A673 (cell line): ENCODE measurements at regions of chr13 and their contacts with region 1.

Region 1: DNA sequence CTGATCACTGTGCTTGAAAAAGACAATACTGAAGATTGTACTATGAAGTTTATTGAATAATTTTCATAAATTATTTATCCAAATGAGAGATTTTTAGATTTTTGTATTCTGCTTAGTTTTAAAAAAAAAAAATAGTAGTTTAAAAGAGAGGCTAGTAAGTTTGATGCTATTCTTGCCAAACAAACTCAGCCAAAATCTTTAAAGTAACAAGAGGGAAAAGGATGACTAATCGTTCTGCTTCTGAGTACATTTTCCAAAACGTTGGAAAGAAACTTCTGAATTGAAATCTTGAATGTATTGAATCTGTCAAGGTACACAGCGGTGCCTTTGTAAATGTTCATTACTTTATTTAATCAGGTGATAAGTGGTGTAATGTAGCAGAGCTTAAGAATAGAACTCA is 34.4 kb downstream of the NUP58 start:
- DNase-seq: no peak
- H3K4me3 ChIP-seq: no peak overlapping the region
- H3K27ac ChIP-seq: no peak overlapping the region
- H3K4me1 ChIP-seq: no peaks in the 10 kb centered on the region
- H3K27me3 ChIP-seq: no peaks in the 10 kb centered on the region
- CTCF ChIP-seq: no peak

Region 2: DNA sequence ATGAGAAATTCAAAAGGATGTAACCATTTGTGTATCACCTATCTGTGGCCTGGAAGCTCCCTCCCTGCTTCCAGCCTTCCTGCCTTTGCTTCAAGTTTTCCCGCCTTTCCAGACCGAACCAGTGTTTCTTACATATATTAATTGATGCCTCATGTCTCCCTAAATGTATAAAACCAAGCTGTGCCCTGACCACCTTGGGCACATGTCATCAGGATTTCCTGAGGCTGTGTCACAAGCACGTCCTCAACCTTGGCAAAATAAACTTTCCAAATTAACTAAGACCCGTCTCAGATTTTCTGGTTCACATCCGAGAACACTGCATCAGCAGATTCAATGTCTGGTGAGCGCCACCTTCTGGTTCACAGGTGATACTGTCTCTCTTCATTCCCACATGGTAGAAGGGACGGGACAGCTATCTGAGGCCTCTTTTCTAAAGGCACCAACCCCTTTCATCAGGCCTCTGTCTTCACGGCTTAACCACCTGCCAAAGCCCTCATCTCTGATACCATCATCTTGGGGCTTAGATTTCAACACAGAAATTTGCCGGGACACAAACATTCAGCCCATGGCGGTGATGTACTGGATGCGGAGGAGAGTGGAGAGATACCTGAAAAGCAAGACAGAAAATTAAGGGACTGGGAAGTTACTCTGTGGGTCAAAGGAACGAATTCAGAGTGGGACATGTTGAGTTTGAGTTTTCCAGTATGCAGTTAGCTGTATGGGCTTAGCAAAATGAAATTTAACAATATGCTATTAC is 298.6 kb before region 1 on chr13:
- CTCF ChIA-PET with region 1: no interaction called
- POLR2A ChIA-PET with region 1: no interaction called
- intact Hi-C with region 1: no loop called
- DNase-seq: peak; percentile 75
- H3K4me3 ChIP-seq: no peak overlapping the region
- H3K27ac ChIP-seq: no peak overlapping the region
- H3K4me1 ChIP-seq: no peaks in the 10 kb centered on the region
- H3K27me3 ChIP-seq: no peaks in the 10 kb centered on the region
- CTCF ChIP-seq: peak; percentile 80

Region 3: GRCh38 chr13:25214491-25215252 is 121.2 kb before region 1 on chr13:
- CTCF ChIA-PET with region 1: no interaction called
- POLR2A ChIA-PET with region 1: no interaction called
- intact Hi-C with region 1: no loop called
- DNase-seq: peak; percentile 40
- H3K4me3 ChIP-seq: no peak overlapping the region
- H3K27ac ChIP-seq: no peak overlapping the region
- H3K4me1 ChIP-seq: peaks cover 7% of the 10 kb centered on the region
- H3K27me3 ChIP-seq: no peaks in the 10 kb centered on the region
- CTCF ChIP-seq: peak; percentile 42

Region 4: GRCh38 chr13:25306671-25307464 is 29.0 kb before region 1 on chr13:
- CTCF ChIA-PET with region 1: no interaction called
- POLR2A ChIA-PET with region 1: interaction called, 19 read pairs
- intact Hi-C with region 1: no loop called
- DNase-seq: no peak
- H3K4me3 ChIP-seq: no peak overlapping the region
- H3K27ac ChIP-seq: peak overlapping the region; percentile 22
- H3K4me1 ChIP-seq: peaks cover 12% of the 10 kb centered on the region
- H3K27me3 ChIP-seq: no peaks in the 10 kb centered on the region
- CTCF ChIP-seq: no peak

Region 5: GRCh38 chr13:25585000-25585399 is 249.1 kb after region 1 on chr13:
- CTCF ChIA-PET with region 1: no interaction called
- POLR2A ChIA-PET with region 1: no interaction called
- intact Hi-C with region 1: no loop called
- DNase-seq: peak; percentile 55
- H3K4me3 ChIP-seq: no peak overlapping the region
- H3K27ac ChIP-seq: no peak overlapping the region
- H3K4me1 ChIP-seq: peaks cover 38% of the 10 kb centered on the region
- H3K27me3 ChIP-seq: no peaks in the 10 kb centered on the region
- CTCF ChIP-seq: no peak